A673 (cell line): ENCODE measurements at regions of chr6 and their contacts with region 1.

Region 1: DNA sequence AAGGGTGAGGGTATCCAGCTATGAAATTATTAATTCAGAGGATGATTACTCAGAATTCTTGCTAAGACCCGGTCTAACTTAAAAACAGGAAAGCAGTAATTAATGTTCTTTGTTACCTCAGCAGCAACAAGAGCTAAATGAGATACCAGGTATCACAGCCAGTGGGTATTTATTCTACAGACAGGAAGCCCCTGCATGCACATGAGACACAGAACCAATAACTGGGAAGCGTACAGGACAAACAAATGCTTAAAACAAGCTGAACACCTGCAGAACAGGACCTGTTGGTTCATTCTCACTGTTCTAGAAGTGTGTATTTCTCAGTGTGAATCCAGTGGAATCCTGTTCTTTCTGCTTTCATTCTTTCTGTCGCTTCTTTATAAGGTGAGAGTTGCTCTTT is 30.9 kb downstream of the SCML4 start:
- DNase-seq: no peak
- H3K4me3 ChIP-seq: no peak overlapping the region
- H3K27ac ChIP-seq: no peak overlapping the region
- H3K4me1 ChIP-seq: no peaks in the 10 kb centered on the region
- H3K27me3 ChIP-seq: peaks cover 5% of the 10 kb centered on the region
- CTCF ChIP-seq: no peak

Region 2: GRCh38 chr6:107533415-107534059 is 259.7 kb before region 1 on chr6:
- CTCF ChIA-PET with region 1: interaction called, 11 read pairs
- POLR2A ChIA-PET with region 1: no interaction called
- intact Hi-C with region 1: no loop called
- DNase-seq: no peak
- H3K4me3 ChIP-seq: no peak overlapping the region
- H3K27ac ChIP-seq: no peak overlapping the region
- H3K4me1 ChIP-seq: no peaks in the 10 kb centered on the region
- H3K27me3 ChIP-seq: no peaks in the 10 kb centered on the region
- CTCF ChIP-seq: no peak

Region 3: DNA sequence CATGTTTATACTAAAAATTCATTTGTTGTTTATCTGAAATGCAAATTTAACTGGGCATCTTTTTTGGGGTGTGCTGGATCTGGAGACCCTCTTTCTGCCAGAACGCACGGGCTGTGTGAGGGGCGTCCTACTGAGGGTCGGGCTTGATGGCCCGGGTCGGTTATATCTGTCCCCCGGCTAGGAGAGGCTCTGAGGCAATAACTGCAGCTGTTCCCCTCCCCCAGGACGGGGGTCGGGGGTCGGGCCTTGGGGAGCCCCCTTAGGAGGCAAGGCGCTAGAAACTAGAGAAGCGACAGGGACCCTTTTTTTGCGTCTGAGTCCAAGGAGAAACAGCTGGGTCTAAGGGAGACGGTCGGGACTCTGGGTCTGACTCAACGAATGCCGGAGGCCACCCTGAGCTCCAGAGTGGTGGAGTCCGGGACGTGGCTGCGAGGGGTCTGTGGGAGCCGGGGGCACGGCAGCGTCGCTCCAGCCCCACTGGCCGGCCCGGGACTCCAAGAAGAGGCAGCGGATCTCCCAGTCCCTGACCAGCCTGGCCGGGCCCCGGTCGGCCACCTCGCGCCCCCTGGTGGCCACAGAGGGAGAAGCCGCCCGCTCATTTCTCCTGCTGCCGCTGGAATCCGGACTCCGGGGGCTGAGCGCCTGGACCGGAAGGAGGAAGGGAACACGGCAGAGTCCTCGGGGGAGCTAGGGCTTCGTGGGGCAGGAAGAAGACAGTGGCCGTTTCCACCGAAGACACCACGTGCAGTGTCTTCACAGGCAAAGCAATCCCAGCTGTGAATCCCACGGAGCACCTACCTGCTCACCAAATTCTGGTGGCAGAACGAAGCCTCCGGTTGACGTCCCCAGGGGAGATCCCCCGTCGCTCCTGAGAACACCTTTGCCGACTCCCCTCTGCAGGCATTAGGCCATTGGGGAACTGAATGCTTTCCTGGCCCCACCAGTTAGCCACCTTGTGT is 54.9 kb after region 1 on chr6:
- CTCF ChIA-PET with region 1: no interaction called
- POLR2A ChIA-PET with region 1: no interaction called
- intact Hi-C with region 1: loop called (anchors 2 kb)
- DNase-seq: peak; percentile 89
- H3K4me3 ChIP-seq: peak overlapping the region; percentile 40
- H3K27ac ChIP-seq: no peak overlapping the region
- H3K4me1 ChIP-seq: no peaks in the 10 kb centered on the region
- H3K27me3 ChIP-seq: no peaks in the 10 kb centered on the region
- CTCF ChIP-seq: peak; percentile 97